Activated CD4-positive, alpha-beta T cell treated with anti-CD3 and anti-CD28 coated beads for 36 hours (primary cell): ENCODE measurements at regions of chr18 and their contacts with region 1.

Region 1: DNA sequence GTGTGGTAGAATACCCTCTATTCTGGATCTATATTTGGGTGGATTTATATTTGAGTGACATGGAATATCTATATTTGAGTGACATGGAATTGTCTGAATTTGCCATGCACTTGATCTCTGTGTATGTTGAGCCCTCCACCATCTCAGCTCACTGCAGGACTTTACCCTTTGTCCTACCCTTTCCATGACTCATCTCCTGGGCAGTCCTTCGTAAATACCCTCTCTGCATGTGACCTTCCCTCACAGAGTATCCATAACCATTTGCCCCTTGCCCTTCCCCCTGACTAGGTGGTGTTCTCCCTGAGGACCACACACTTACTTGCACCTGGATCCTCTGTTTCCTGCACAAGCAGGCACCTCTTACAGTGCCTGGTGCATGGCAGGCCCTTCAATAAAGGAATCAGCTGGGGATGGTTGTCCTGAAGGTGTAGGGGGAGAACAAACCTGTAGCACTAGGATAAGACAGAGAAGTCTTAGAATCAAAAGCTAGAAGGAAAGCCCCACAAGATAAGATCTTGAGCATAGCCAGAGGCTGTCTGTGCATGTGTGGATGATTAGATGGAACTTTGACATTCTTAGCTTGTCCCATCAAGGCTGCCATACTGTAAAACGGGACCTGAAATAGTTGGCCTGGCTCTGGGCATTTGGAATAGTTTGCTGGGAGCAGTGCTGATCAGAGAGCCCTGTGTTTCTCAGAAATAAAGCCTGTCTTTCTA is 230.4 kb downstream of the FHOD3 start:
- DNase-seq: no peak
- ATAC-seq: no peak
- H3K4me3 Mint-ChIP-seq: no peak overlapping the region
- H3K27ac Mint-ChIP-seq: no peak overlapping the region
- H3K4me1 Mint-ChIP-seq: no peaks in the 10 kb centered on the region
- H3K27me3 Mint-ChIP-seq: no peaks in the 10 kb centered on the region

Region 2: DNA sequence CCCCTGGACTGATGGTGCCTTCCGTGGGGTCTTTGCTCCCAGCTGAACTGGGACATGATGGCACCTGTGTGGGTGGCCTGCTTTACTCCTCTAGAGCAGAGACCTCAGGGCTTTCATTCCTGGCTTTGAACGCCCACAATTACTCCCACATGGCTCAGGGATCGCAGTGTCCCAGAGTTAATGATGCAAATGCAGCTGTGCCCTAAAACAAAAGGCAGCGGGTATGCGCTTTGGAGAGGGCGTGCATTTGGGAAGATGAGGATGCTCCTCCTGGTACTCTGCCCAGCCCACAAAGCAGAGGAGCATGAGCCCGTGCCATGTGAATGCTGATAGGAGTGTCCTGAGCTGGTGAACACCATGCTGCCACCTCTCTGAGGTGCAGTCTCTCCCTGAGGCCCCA is 57.0 kb before region 1 on chr18:
- CTCF ChIA-PET with region 1: no interaction called
- POLR2A ChIA-PET with region 1: no interaction called
- intact Hi-C with region 1: loop called in 1 of 2 experiments (anchors 10 kb)
- DNase-seq: no peak
- ATAC-seq: no peak
- H3K4me3 Mint-ChIP-seq: no peak overlapping the region
- H3K27ac Mint-ChIP-seq: no peak overlapping the region
- H3K4me1 Mint-ChIP-seq: peaks cover 3% of the 10 kb centered on the region
- H3K27me3 Mint-ChIP-seq: peaks cover 4% of the 10 kb centered on the region